Heart right ventricle (tissue), 16 donors: ENCODE measurements at regions of chr4 and their contacts with region 1.

Region 1: GRCh38 chr4:147683717-147684700 is at the start of gene PRMT9:
- DNase-seq: peak; percentile 91 to 93
- ATAC-seq: peak; percentile 99 to 100 (median 100)
- H3K4me3 ChIP-seq: peak within 1 kb of the TSS; percentile 51 to 96 (median 78)
- H3K27ac ChIP-seq: peak within 1 kb of the TSS; percentile 76 to 95 (median 88)
- H3K4me1 ChIP-seq: peaks cover 0 to 24% (median 16%) of the 10 kb centered on the region in 9 donors
- H3K27me3 ChIP-seq: no peaks in the 10 kb centered on the region
- CTCF ChIP-seq: no peak
- total RNA-seq, gene PRMT9: 5.1 to 7.3 (median 6.6) TPM

Region 2: GRCh38 chr4:147617173-147617840 is 66.7 kb before region 1 on chr4 and contains the start of gene TMEM184C:
- intact Hi-C with region 1: loop called in 1 of 10 experiments (anchors 5 kb)
- DNase-seq: peak; percentile 98
- ATAC-seq: peak; percentile 99 to 100 (median 100)
- H3K4me3 ChIP-seq: peak within 1 kb of the TSS; percentile 61 to 97 (median 72)
- H3K27ac ChIP-seq: peak within 1 kb of the TSS in 9 of 10 donors; percentile 67 to 92 (median 76)
- H3K4me1 ChIP-seq: peaks cover 0 to 51% (median 36%) of the 10 kb centered on the region in 9 donors
- H3K27me3 ChIP-seq: peaks cover 0 to 4% (median 0%) of the 10 kb centered on the region in 7 donors
- CTCF ChIP-seq: peak in 5 of 9 donors; percentile 7 to 34 (median 13)
- total RNA-seq, gene TMEM184C: 18.9 to 30.5 (median 21.4) TPM